Pancreas (tissue), 10 donors: ENCODE measurements at regions of chr19 and their contacts with region 1.

Region 1: GRCh38 chr19:17703824-17704463 is 15.3 kb upstream of the MAP1S start:
- DNase-seq: peak in 3 of 6 donors; percentile 49 to 82 (median 53)
- ATAC-seq: peak; percentile 55 to 85 (median 80)
- H3K4me3 ChIP-seq: no peak overlapping the region
- H3K27ac ChIP-seq: no peak overlapping the region
- H3K4me1 ChIP-seq: no peaks in the 10 kb centered on the region
- H3K27me3 ChIP-seq: no peaks in the 10 kb centered on the region
- CTCF ChIP-seq: peak; percentile 54 to 80 (median 70)

Region 2: GRCh38 chr19:17847538-17848366 is 143.8 kb after region 1 on chr19 and contains the start of gene JAK3:
- intact Hi-C with region 1: loop called in 2 of 3 experiments (anchors 10 kb)
- DNase-seq: peak in 3 of 6 donors; percentile 36 to 74 (median 56)
- ATAC-seq: peak in 3 of 4 donors; percentile 47 to 64 (median 62)
- H3K4me3 ChIP-seq: peak within 1 kb of the TSS in 1 of 4 donors; percentile 35
- H3K27ac ChIP-seq: peak within 1 kb of the TSS in 2 of 4 donors; percentile 65 to 75
- H3K4me1 ChIP-seq: no peaks in the 10 kb centered on the region
- H3K27me3 ChIP-seq: no peaks in the 10 kb centered on the region
- CTCF ChIP-seq: no peak
- total RNA-seq, gene JAK3: 1.1 to 6.6 (median 1.7) TPM